PC-3 (cell line): ENCODE measurements at regions of chr6 and their contacts with region 1.

Region 1: GRCh38 chr6:35522660-35523658 is 10.3 kb upstream of the TULP1 start:
- DNase-seq: peak; percentile 82
- ATAC-seq: peak; percentile 98
- H3K4me3 ChIP-seq: peak overlapping the region; percentile 62
- H3K27ac ChIP-seq: no peak overlapping the region
- H3K4me1 ChIP-seq: no peaks in the 10 kb centered on the region
- H3K27me3 ChIP-seq: no peaks in the 10 kb centered on the region
- CTCF ChIP-seq: peak; percentile 90

Region 2: DNA sequence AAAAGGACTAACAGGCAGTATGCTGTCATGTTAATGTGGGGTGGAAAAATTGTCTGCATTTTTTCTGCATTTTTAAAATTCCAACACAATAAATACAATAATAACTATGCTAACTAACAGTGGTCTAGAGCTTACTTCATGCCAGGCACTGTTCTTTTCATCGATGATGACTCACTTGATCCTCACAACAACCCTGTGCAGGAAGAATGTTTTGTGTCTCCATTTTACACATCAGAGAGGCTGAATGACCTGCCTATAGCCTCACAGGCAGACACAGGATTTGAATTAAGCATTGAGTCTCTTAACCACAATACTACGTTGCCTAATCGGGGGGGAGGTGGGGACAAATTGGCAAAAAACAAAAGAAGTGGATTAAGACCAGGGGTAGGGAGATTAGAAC is 97.7 kb before region 1 on chr6:
- CTCF ChIA-PET with region 1: no interaction called
- POLR2A ChIA-PET with region 1: no interaction called
- intact Hi-C with region 1: no loop called
- DNase-seq: peak; percentile 74
- ATAC-seq: peak; percentile 37
- H3K4me3 ChIP-seq: no peak overlapping the region
- H3K27ac ChIP-seq: peak overlapping the region; percentile 98
- H3K4me1 ChIP-seq: peaks cover 48% of the 10 kb centered on the region
- H3K27me3 ChIP-seq: no peaks in the 10 kb centered on the region
- CTCF ChIP-seq: no peak

Region 3: GRCh38 chr6:35552285-35552917 is 29.4 kb after region 1 on chr6:
- CTCF ChIA-PET with region 1: interaction called, 10 read pairs
- POLR2A ChIA-PET with region 1: no interaction called
- intact Hi-C with region 1: loop called (anchors 2 kb)
- DNase-seq: peak; percentile 80
- ATAC-seq: peak; percentile 40; the same call in 1 of the 2 replicates
- H3K4me3 ChIP-seq: no peak overlapping the region
- H3K27ac ChIP-seq: no peak overlapping the region
- H3K4me1 ChIP-seq: no peaks in the 10 kb centered on the region
- H3K27me3 ChIP-seq: no peaks in the 10 kb centered on the region
- CTCF ChIP-seq: peak; percentile 94

Region 4: DNA sequence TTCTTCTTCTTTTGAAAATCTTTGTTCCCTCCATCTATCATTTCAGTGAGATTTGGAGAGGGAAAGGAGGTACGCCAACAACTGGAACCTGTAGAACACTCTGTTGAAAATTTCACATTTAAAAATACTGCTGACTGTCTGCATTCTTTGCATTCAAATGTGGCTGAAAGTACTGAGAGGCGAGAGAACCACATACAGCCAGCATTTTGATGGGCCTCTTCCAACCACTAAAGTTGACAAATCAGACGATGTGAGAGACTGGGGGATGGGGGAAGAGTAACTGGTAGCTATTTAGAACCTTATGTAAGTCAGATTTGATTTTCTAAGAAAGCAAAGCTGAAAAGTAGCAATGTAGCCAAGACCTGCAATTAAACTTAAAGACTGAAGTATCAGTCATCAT is 88.3 kb after region 1 on chr6:
- CTCF ChIA-PET with region 1: no interaction called
- POLR2A ChIA-PET with region 1: no interaction called
- intact Hi-C with region 1: loop called (anchors 10 kb)
- DNase-seq: no peak
- ATAC-seq: no peak
- H3K4me3 ChIP-seq: no peak overlapping the region
- H3K27ac ChIP-seq: no peak overlapping the region
- H3K4me1 ChIP-seq: no peaks in the 10 kb centered on the region; the same call in 1 of the 2 replicates
- H3K27me3 ChIP-seq: no peaks in the 10 kb centered on the region
- CTCF ChIP-seq: no peak

Region 5: DNA sequence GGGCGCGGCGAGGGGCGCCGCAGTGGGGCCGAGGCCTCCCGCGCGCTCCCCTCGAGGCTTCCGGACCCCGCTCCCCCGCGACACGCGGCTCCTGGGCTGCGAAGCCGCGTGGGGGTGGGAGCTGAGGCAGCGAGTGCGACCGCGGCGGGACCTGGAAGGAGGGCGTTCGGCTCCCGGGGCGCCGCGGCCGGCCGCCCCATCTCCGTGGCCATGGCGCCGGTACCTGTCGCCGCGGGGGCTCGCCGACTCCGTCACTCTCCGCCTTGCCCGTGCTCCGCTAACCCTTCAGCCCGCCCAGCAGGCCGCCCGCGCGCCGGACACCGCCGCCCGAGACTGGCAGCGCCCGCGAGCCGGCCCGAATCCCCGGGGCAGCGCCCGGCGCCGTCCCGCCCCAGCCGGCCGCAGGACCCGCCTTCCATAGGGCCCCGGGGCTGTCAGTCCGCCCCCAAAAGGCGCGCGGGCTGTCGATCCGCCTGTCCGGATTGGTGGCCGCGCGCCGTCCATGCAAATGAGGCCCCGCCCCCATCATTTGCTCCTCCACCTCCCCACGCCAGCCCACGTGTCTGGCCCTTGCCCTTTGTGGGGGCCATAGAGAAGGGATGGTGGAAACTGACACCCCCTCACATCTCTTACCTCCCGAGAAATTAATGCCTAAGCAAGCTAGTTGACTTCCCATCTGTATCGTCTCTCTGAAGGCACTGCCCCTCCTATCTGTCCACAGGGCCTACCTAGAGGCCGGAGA is 165.8 kb after region 1 on chr6 and contains the start of gene FKBP5:
- CTCF ChIA-PET with region 1: no interaction called
- POLR2A ChIA-PET with region 1: interaction called, 7 read pairs
- intact Hi-C with region 1: loop called (anchors 5 kb)
- DNase-seq: peak; percentile 91
- ATAC-seq: peak; percentile 93
- H3K4me3 ChIP-seq: peak within 1 kb of the TSS; percentile 90
- H3K27ac ChIP-seq: no peak within 1 kb of the TSS
- H3K4me1 ChIP-seq: peaks cover 7% of the 10 kb centered on the region; the same call in 1 of the 2 replicates
- H3K27me3 ChIP-seq: no peaks in the 10 kb centered on the region
- CTCF ChIP-seq: no peak
- total RNA-seq, gene FKBP5: 11.9 and 12.4 TPM in 2 replicates

Region 6: GRCh38 chr6:35736253-35736894 is 213.4 kb after region 1 on chr6:
- CTCF ChIA-PET with region 1: interaction called, 25 read pairs
- POLR2A ChIA-PET with region 1: no interaction called
- intact Hi-C with region 1: loop called (anchors 1 kb)
- DNase-seq: peak; percentile 81
- ATAC-seq: peak; percentile 14; the same call in 1 of the 2 replicates
- H3K4me3 ChIP-seq: no peak overlapping the region
- H3K27ac ChIP-seq: no peak overlapping the region
- H3K4me1 ChIP-seq: peaks cover 7% of the 10 kb centered on the region
- H3K27me3 ChIP-seq: no peaks in the 10 kb centered on the region
- CTCF ChIP-seq: peak; percentile 93